ENCODE measurements at regions of chr7 and their contacts with region 1.

Region 1: GRCh38 chr7:73738612-73739374 is at the start of gene ABHD11:
- DNase-seq: peak; percentile 94
- H3K4me3 Mint-ChIP-seq: peak within 1 kb of the TSS; percentile 91
- H3K27ac Mint-ChIP-seq: peak within 1 kb of the TSS; percentile 94
- H3K4me1 Mint-ChIP-seq: peaks cover 14% of the 10 kb centered on the region
- H3K27me3 Mint-ChIP-seq: no peaks in the 10 kb centered on the region
- CTCF ChIP-seq: no peak
- total RNA-seq, gene ABHD11: 15.3 and 18.9 TPM in 2 replicates

Region 2: GRCh38 chr7:73522105-73522872 is 216.5 kb before region 1 on chr7 and contains the start of gene BAZ1B:
- CTCF ChIA-PET with region 1: interaction called, 3 read pairs
- POLR2A ChIA-PET with region 1: interaction called, 6 read pairs
- intact Hi-C with region 1: loop called (anchors 2 kb)
- DNase-seq: peak; percentile 98
- H3K4me3 Mint-ChIP-seq: peak within 1 kb of the TSS; percentile 91
- H3K27ac Mint-ChIP-seq: peak within 1 kb of the TSS; percentile 91
- H3K4me1 Mint-ChIP-seq: peaks cover 17% of the 10 kb centered on the region
- H3K27me3 Mint-ChIP-seq: no peaks in the 10 kb centered on the region
- CTCF ChIP-seq: peak; percentile 13
- total RNA-seq, gene BAZ1B: 84.0 and 86.7 TPM in 2 replicates

Region 3: DNA sequence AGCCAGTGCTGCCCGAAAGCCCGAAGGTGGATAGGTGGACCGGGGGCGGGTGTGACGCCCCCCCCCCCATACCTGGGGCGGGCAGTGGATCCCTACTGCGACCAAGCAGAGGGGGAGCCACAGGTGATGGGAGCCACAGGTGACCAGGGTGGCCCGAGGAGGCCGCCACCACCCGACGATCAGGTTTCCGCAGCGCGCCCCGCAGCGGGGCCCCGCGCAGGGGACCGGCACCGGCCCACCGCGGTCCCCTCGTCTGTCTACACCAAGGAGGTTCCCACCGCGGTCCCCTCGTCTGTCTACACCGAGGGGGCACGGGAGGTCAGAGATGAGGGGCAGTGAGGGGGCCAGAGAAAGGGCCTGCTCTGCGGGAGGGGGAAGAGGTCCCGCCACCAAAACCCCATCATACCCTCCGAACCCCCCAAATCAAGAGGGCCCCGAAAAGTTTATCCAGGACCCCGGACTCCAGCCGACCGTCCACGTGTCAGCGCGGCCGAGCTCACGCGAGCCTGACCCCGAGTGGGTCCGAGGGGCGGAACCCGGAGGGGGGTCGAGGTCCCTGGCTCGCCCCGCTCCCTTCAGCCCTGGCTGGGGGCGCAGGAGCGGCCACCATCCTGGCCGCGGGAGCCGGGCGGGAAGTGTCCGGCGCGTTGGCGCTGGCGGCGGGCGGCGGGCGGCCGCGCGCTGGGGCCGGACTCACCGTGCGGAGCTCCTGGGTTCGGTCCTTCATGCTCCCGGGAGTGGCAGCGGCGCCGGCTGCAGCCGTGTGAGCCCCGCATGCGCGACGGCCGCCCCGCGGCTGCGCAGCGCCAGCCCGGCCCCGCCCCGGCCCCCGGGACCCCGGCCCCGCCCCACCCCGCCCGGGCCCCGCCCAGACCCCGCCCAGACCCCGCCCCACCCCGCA is 19.6 kb before region 1 on chr7 and contains the start of gene STX1A:
- CTCF ChIA-PET with region 1: interaction called, 4 read pairs
- POLR2A ChIA-PET with region 1: interaction called, 10 read pairs
- intact Hi-C with region 1: no loop called
- DNase-seq: peak; percentile 73
- H3K4me3 Mint-ChIP-seq: peak within 1 kb of the TSS; percentile 71
- H3K27ac Mint-ChIP-seq: no peak within 1 kb of the TSS
- H3K4me1 Mint-ChIP-seq: peaks cover 34% of the 10 kb centered on the region
- H3K27me3 Mint-ChIP-seq: no peaks in the 10 kb centered on the region
- CTCF ChIP-seq: no peak
- total RNA-seq, gene STX1A: 21.9 and 24.2 TPM in 2 replicates

Region 4: DNA sequence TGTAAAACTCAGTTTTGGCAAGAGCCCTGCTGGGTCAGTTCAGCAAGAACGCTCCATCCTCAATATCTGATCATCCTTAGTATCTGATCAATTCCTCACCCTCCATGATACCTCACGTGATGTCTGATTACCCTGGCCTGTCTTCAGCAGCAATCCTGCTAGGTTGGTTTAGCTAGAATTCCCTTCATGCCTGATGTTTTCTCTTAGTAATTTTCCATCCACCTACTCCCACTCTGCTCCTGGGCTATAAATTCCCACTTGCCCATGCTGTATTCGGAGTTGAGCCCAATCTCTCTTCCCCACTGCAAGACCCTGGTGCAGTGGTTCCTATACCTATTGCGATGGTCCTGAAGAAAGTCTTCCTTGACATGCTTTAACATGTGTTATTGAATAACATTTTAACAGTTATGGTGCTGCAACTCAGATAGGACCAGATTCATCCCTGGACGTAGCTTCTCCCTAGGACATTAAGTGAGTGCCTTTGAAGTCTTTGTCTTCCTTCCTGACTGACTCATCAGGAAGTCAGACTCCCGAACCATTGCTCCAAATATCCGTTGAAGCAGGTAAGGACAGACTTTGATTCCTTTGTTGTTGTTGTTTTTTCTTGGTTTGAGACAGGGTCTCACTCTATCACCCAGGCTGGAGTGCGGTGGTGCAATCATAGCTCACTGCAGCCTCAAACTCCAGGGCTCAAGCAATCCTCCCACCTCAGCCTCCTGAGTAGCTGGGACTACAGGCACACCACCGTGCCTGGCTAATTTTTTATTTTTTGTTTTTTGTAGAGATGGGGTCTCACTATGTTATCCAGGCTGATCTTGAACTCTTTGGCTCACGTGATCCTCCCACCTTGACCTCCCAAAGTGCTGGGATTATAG is 60.7 kb after region 1 on chr7:
- CTCF ChIA-PET with region 1: interaction called, 4 read pairs
- POLR2A ChIA-PET with region 1: interaction called, 10 read pairs
- intact Hi-C with region 1: loop called (anchors 10 kb)
- DNase-seq: peak; percentile 33
- H3K4me3 Mint-ChIP-seq: no peak overlapping the region
- H3K27ac Mint-ChIP-seq: no peak overlapping the region
- H3K4me1 Mint-ChIP-seq: peaks cover 7% of the 10 kb centered on the region
- H3K27me3 Mint-ChIP-seq: no peaks in the 10 kb centered on the region
- CTCF ChIP-seq: no peak

Region 5: DNA sequence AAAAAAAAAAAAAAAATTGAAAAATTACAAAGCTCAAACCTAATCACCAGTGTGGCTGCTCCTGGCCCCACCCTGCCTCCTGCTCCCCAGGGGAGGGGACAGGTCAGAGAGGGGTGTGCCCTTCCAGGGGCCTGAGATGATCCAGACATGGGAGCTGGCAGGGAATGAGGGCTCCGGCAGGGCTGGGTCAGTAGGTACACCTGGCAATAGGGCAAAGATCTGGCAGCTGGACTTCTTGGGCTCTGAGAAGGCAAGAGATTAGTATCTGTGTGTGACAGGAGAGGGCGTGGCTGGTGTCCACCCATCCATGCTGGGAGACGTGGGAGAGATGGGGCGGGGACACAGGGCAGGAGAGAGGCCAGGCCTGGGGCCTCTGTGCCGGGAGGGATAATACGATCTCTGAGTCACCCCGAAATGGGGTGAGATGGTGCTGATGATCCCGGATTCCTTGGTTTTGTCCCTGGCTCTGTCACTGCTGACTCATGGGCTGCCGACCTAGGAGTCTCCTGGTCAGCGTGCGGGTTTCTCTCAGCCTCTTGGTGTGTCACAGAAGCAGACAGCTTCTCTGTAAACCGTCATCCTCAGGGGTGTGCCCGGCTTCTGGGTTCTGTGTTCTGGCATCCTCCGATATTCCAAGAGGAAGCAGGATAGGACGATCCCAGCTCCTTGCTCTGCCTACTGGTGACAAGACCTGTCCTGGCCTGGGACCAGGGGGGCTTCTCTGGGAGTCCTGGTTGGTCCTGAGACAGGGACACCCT is 83.7 kb after region 1 on chr7:
- CTCF ChIA-PET with region 1: interaction called, 5 read pairs
- POLR2A ChIA-PET with region 1: interaction called, 13 read pairs
- intact Hi-C with region 1: no loop called
- DNase-seq: peak; percentile 98
- H3K4me3 Mint-ChIP-seq: peak overlapping the region; percentile 13
- H3K27ac Mint-ChIP-seq: peak overlapping the region; percentile 80
- H3K4me1 Mint-ChIP-seq: peaks cover 31% of the 10 kb centered on the region
- H3K27me3 Mint-ChIP-seq: no peaks in the 10 kb centered on the region
- CTCF ChIP-seq: no peak

Region 6: GRCh38 chr7:73858807-73859206 is 120.0 kb after region 1 on chr7:
- CTCF ChIA-PET with region 1: interaction called, 35 read pairs
- POLR2A ChIA-PET with region 1: interaction called, 21 read pairs
- intact Hi-C with region 1: no loop called
- DNase-seq: no peak
- H3K4me3 Mint-ChIP-seq: no peak overlapping the region
- H3K27ac Mint-ChIP-seq: no peak overlapping the region
- H3K4me1 Mint-ChIP-seq: no peaks in the 10 kb centered on the region
- H3K27me3 Mint-ChIP-seq: peaks cover 12% of the 10 kb centered on the region
- CTCF ChIP-seq: no peak

Region 7: DNA sequence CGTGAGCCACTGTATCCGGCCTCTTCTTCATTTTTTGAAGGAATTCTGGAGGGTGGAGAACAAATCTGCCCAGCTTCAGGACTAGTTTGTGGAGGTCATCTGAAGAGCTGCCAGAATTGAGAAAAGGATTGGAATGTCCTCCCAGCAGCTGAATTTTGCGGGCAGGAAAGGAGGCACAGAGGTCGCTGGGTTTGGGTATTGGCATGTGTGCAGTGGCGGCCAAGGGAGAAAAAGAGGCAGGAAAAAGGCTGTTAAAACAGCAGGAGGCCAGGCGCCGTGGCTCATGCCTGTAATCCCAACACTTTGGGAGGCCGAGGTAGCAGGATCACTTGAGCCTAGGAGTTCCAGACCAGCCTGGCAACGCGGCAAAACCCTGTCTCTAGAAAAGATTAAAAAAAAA is 1919.6 kb after region 1 on chr7:
- CTCF ChIA-PET with region 1: no interaction called
- POLR2A ChIA-PET with region 1: no interaction called
- intact Hi-C with region 1: no loop called
- DNase-seq: no peak
- H3K4me3 Mint-ChIP-seq: no peak overlapping the region
- H3K27ac Mint-ChIP-seq: no peak overlapping the region
- H3K4me1 Mint-ChIP-seq: no peaks in the 10 kb centered on the region
- H3K27me3 Mint-ChIP-seq: no peaks in the 10 kb centered on the region
- CTCF ChIP-seq: no peak